ENCODE measurements at regions of chr7 and their contacts with region 1.

Region 1: DNA sequence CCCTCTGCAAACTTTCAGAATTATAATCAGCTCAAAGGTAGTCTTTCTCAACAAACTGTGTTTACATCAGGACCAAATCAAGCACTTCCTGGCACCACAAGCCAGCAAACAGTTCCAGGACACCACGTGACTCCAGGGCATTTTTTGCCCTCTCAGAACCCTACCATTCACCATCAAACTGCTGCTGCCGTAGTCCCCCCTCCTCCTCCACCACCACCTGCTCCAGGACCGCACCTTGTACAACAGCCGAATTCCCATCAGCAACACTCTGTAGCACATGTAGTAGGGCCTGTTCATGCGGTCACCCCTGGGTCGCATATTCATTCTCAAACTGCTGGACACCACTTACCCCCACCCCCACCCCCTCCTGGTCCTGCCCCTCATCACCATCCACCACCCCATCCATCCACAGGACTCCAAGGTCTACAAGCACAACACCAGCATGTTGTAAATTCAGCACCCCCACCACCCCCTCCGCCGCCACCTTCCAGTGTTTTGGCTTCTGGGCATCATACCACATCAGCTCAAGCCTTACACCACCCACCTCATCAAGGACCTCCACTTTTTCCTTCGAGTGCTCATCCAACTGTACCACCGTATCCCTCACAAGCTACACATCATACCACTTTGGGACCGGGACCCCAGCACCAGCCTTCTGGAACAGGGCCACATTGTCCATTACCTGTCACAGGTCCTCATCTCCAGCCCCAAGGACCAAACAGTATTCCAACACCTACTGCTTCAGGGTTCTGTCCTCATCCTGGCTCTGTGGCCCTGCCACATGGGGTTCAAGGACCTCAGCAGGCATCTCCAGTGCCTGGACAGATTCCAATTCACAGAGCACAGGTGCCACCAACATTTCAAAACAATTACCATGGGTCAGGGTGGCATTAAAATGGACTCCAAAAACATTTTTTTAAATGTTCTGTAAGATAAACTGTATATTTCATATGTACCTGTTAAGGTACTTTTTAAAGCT is 98.7 kb downstream of the KMT2E start:
- DNase-seq: no peak
- H3K4me3 ChIP-seq: no peak overlapping the region
- H3K27ac ChIP-seq: no peak overlapping the region
- H3K4me1 ChIP-seq: no peaks in the 10 kb centered on the region
- H3K27me3 ChIP-seq: no peaks in the 10 kb centered on the region
- CTCF ChIP-seq: no peak

Region 2: GRCh38 chr7:104111271-104111670 is 1001.5 kb before region 1 on chr7:
- CTCF ChIA-PET with region 1: no interaction called
- POLR2A ChIA-PET with region 1: no interaction called
- intact Hi-C with region 1: no loop called
- DNase-seq: no peak
- H3K4me3 ChIP-seq: no peak overlapping the region
- H3K27ac ChIP-seq: no peak overlapping the region
- H3K4me1 ChIP-seq: no peaks in the 10 kb centered on the region
- H3K27me3 ChIP-seq: peaks cover 7% of the 10 kb centered on the region; the same call in 1 of the 2 replicates
- CTCF ChIP-seq: no peak

Region 3: GRCh38 chr7:105477908-105478307 is 365.2 kb after region 1 on chr7:
- CTCF ChIA-PET with region 1: no interaction called
- POLR2A ChIA-PET with region 1: interaction called, 10 read pairs
- intact Hi-C with region 1: no loop called
- DNase-seq: no peak
- H3K4me3 ChIP-seq: no peak overlapping the region
- H3K27ac ChIP-seq: no peak overlapping the region
- H3K4me1 ChIP-seq: no peaks in the 10 kb centered on the region
- H3K27me3 ChIP-seq: no peaks in the 10 kb centered on the region
- CTCF ChIP-seq: no peak

Measured in PC-9 (cell line).